Activated CD4-positive, alpha-beta T cell treated with anti-CD3 and anti-CD28 coated beads for 36 hours (primary cell): ENCODE measurements at regions of chrX and their contacts with region 1.

Region 1: GRCh38 chrX:109536439-109537336 is at the start of gene NXT2:
- DNase-seq: peak; percentile 91
- ATAC-seq: peak; percentile 98
- H3K4me3 Mint-ChIP-seq: peak within 1 kb of the TSS; percentile 89
- H3K27ac Mint-ChIP-seq: peak within 1 kb of the TSS; percentile 99
- H3K4me1 Mint-ChIP-seq: peaks cover 14% of the 10 kb centered on the region
- H3K27me3 Mint-ChIP-seq: peaks cover 5% of the 10 kb centered on the region
- total RNA-seq, gene NXT2: 10.9 to 11.6 TPM

Region 2: GRCh38 chrX:109600237-109600651 is 63.6 kb after region 1 on chrX:
- CTCF ChIA-PET with region 1: no interaction called
- POLR2A ChIA-PET with region 1: no interaction called
- intact Hi-C with region 1: no loop called
- DNase-seq: no peak
- ATAC-seq: no peak
- H3K4me3 Mint-ChIP-seq: no peak overlapping the region
- H3K27ac Mint-ChIP-seq: no peak overlapping the region
- H3K4me1 Mint-ChIP-seq: no peaks in the 10 kb centered on the region
- H3K27me3 Mint-ChIP-seq: peaks cover 21% of the 10 kb centered on the region

Region 3: DNA sequence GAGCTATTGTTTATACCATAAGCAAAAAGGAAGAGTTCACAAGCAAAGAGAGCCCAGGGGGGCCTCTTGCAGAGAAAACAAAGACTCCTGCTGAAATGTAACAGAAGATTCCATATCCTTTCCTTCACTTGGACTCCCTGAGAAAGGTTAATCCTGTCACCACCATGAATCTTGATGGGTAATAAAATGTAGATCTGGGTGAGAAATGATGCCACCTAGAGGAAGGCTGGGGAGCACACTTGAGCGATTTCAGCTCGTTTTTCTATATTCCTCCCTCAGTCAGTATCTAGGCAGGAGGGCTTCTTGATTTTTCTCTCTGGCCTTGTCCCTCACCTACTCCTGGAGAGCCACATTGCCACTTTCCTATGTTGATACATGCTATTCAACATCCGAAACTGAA is 98.5 kb after region 1 on chrX:
- CTCF ChIA-PET with region 1: no interaction called
- POLR2A ChIA-PET with region 1: no interaction called
- intact Hi-C with region 1: loop called in 1 of 2 experiments (anchors 5 kb)
- DNase-seq: peak; percentile 6
- ATAC-seq: no peak
- H3K4me3 Mint-ChIP-seq: no peak overlapping the region
- H3K27ac Mint-ChIP-seq: no peak overlapping the region
- H3K4me1 Mint-ChIP-seq: no peaks in the 10 kb centered on the region
- H3K27me3 Mint-ChIP-seq: no peaks in the 10 kb centered on the region

Region 4: DNA sequence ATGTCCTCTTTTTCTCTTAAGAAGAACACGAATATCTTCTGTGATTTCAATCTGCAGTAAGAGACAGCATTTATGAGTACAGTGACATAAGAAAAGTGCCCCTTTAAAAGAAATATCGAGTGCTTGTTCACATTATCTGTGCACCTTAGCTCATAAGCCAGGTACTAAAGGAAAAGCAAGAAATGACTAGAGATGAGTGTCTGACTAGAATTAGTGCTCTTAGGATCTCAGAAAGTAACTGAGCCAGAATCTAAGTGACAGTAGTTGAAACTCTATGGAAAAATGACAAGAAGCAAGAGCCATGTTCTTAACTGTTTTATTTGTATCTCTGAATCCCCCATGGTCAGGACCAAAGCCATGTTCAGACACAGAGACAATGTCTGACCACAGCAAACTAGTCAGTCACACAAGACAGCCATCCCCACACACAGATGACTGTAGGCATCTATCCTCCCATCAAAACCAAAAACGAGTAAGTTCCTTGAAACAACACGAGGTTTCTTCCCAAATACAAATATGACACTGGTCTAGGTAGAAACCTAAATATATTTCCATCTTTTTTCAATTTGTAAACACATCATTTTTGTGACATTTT is 159.6 kb after region 1 on chrX:
- CTCF ChIA-PET with region 1: no interaction called
- POLR2A ChIA-PET with region 1: no interaction called
- intact Hi-C with region 1: loop called in 1 of 2 experiments (anchors 10 kb)
- DNase-seq: no peak
- ATAC-seq: peak; percentile 36
- H3K4me3 Mint-ChIP-seq: no peak overlapping the region
- H3K27ac Mint-ChIP-seq: peak overlapping the region; percentile 8
- H3K4me1 Mint-ChIP-seq: peaks cover 30% of the 10 kb centered on the region
- H3K27me3 Mint-ChIP-seq: no peaks in the 10 kb centered on the region

Region 5: DNA sequence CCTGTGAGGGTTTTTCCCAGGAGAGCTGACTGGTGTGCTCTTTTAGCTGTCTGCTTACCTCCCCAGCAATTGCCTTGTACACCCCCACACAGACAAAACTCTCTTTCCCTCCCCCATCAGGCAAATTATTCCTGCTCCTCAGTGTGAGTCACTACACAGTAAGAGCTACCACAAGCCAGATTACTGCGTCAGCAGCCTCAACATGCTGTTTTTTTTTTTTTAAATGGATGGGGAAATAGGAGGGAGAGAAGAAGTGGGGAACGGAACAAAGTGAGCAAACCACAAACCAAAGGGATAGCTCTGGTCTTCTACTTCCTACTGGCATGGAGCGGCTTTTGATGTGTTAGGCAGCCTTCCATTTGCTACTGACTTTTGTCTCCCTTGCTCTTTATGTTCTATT is 303.9 kb after region 1 on chrX:
- CTCF ChIA-PET with region 1: no interaction called
- POLR2A ChIA-PET with region 1: interaction called, 4 read pairs
- intact Hi-C with region 1: loop called in 1 of 2 experiments (anchors 5 kb)
- DNase-seq: peak; percentile 28
- ATAC-seq: peak; percentile 50
- H3K4me3 Mint-ChIP-seq: no peak overlapping the region
- H3K27ac Mint-ChIP-seq: no peak overlapping the region
- H3K4me1 Mint-ChIP-seq: peaks cover 12% of the 10 kb centered on the region
- H3K27me3 Mint-ChIP-seq: no peaks in the 10 kb centered on the region

Region 6: DNA sequence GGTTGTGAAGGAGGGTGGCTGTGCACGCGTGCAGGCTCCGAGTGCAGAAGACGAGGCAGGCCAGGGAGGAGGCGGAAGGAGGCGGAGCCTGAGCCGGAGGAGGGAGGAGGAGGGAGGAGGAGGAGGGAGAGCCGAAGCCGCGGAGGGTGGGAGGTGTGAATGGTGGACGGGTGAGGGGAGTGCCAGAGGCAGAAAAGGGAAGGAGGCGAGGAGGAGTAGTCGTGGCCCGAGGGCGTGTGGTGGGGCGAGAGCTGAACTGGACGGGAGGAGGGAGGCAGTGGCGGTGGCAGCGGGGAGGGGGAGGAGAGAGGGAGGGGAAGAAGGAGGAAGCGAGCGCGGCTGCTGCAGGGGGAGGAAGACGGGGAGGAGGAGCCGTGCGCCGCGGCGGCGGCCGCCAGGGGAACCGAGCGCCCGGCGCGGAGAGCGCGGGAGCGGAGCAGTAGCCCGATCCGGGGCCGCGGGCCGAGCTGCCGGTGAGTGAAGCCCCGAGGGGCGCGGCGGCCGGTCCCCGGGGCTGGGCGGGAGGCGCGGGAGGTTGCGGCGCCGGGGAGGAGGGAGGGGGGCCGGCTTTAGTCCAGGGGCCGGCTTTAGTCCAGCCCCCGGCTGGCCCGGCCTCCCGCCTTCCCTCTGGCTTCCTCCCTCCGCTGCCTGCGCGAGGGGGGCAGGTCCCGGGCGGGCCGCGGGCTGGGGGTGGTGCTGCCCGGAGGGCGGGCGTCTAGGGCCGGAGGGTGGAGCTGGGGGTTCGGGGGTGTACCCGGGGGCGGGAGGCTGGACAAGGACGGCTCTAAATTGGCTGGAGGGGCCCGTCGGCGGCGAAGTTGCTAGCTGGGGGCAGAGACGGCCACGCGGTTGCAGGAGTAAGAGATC is 465.8 kb after region 1 on chrX and contains the start of gene TMEM164:
- CTCF ChIA-PET with region 1: no interaction called
- POLR2A ChIA-PET with region 1: no interaction called
- intact Hi-C with region 1: loop called in 1 of 2 experiments (anchors 1 kb)
- DNase-seq: peak; percentile 87
- ATAC-seq: peak; percentile 84
- H3K4me3 Mint-ChIP-seq: peak within 1 kb of the TSS; percentile 81
- H3K27ac Mint-ChIP-seq: peak within 1 kb of the TSS; percentile 74
- H3K4me1 Mint-ChIP-seq: peaks cover 27% of the 10 kb centered on the region
- H3K27me3 Mint-ChIP-seq: no peaks in the 10 kb centered on the region
- total RNA-seq, gene TMEM164: 10.5 to 12.2 TPM